PC-3 (cell line): ENCODE measurements at regions of chr12 and their contacts with region 1.

Region 1: GRCh38 chr12:82685790-82686167 is 927 bp upstream of the TMTC2 start:
- DNase-seq: peak; percentile 97
- ATAC-seq: peak; percentile 48
- H3K4me3 ChIP-seq: peak overlapping the region; percentile 76
- H3K27ac ChIP-seq: peak overlapping the region; percentile 96
- H3K4me1 ChIP-seq: peaks cover 49% of the 10 kb centered on the region
- H3K27me3 ChIP-seq: no peaks in the 10 kb centered on the region
- CTCF ChIP-seq: peak; percentile 94

Region 2: DNA sequence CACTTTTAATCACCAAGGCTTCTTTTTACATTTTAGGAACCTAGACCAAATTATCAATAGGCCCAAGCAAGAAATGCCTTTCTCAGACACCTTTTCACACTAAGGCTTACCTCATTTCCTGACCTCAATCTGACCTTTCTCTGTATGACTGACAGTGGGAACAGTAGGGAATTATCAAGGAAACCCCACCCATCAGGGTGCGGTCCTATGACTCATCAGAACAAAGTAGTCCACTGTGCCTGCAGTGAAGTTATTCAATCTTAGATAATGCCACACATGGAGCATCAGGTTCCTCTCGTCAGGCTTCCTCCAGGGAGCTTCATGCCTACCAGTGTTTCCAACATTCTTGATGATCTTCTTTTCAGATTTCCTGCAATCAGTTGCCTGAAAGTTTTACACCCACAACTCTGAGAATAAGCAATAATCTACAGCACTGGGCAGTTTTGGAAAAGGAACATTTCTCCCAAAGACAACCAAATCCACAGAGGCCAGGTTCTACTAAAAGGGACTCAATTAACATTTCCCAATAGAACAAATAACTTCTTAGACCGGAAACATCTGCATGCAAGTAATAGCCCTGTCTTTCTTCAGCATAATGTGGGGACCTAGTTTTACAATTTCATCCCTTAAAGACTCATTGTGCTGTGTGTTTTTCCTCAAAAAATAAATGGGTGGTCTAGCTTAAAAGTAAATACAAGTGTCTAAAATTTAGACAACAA is 35.0 kb before region 1 on chr12:
- CTCF ChIA-PET with region 1: no interaction called
- POLR2A ChIA-PET with region 1: interaction called, 4 read pairs
- intact Hi-C with region 1: loop called (anchors 2 kb)
- DNase-seq: peak; percentile 98
- ATAC-seq: peak; percentile 91
- H3K4me3 ChIP-seq: peak overlapping the region; percentile 16; the same call in 1 of the 2 replicates
- H3K27ac ChIP-seq: peak overlapping the region; percentile 96
- H3K4me1 ChIP-seq: peaks cover 35% of the 10 kb centered on the region
- H3K27me3 ChIP-seq: no peaks in the 10 kb centered on the region
- CTCF ChIP-seq: no peak

Region 3: DNA sequence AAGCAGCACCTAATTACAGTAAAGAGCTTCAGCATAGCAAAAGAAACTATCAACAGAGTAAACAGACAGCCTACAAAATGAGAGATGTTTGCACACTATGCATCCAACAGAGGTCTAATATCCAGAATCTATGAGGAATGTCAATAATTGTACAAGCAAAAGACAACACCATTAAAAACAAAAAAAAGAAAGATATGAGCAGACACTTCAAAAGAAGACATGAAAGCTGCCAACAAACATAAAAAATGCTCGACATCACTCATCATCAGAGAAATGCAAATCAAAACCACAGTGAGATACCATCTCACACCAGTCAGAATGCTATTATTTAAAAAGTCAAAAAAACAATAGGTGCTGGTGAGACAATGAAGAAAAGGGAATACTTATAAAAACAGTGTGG is 274.0 kb after region 1 on chr12:
- CTCF ChIA-PET with region 1: interaction called, 4 read pairs
- POLR2A ChIA-PET with region 1: no interaction called
- intact Hi-C with region 1: loop called (anchors 1 kb)
- DNase-seq: peak; percentile 39
- ATAC-seq: peak; percentile 74
- H3K4me3 ChIP-seq: no peak overlapping the region
- H3K27ac ChIP-seq: peak overlapping the region; percentile 43
- H3K4me1 ChIP-seq: peaks cover 28% of the 10 kb centered on the region
- H3K27me3 ChIP-seq: no peaks in the 10 kb centered on the region
- CTCF ChIP-seq: no peak

Region 4: DNA sequence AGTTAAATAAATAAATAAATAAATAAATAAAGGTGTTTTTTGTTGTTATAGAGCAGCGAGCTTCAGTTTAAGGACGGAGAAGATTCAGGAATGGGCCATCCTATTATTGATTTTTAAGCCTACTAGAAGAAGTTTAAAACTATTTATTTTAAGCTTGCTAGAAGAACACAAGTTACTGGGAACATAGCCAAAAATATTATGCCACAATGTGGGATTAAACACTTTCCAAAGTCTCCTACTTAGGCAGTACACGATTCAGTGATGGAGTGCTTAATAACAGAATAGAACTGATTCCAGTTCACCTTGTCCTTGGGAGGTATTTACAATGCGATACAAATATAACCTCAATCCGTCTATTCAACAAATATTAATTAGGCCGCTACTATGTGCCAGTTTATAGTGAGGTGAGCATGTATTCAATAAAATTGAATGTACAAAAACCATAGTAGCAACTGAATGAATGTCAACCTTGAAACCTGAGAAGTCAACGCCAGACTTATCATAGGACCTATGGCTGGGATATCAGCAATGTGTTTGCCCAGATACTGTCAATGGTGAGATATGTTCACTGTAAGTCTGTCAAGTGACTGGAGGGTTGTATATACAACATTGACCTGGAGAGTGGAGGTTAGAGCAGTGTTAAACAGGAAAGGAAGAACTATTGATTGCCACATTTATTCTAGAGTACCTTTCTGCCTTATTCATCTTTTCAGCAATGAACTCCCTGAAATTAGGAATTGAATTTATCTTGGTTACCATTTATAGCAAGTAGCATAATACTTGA is 487.3 kb after region 1 on chr12:
- CTCF ChIA-PET with region 1: no interaction called
- POLR2A ChIA-PET with region 1: no interaction called
- intact Hi-C with region 1: loop called (anchors 10 kb)
- DNase-seq: no peak
- ATAC-seq: no peak
- H3K4me3 ChIP-seq: no peak overlapping the region
- H3K27ac ChIP-seq: no peak overlapping the region
- H3K4me1 ChIP-seq: no peaks in the 10 kb centered on the region
- H3K27me3 ChIP-seq: no peaks in the 10 kb centered on the region
- CTCF ChIP-seq: no peak

Region 5: GRCh38 chr12:83823431-83823963 is 1137.7 kb after region 1 on chr12:
- CTCF ChIA-PET with region 1: no interaction called
- POLR2A ChIA-PET with region 1: no interaction called
- intact Hi-C with region 1: loop called (anchors 10 kb)
- DNase-seq: peak; percentile 64
- ATAC-seq: peak; percentile 46; the same call in 1 of the 2 replicates
- H3K4me3 ChIP-seq: no peak overlapping the region
- H3K27ac ChIP-seq: no peak overlapping the region
- H3K4me1 ChIP-seq: peaks cover 10% of the 10 kb centered on the region
- H3K27me3 ChIP-seq: no peaks in the 10 kb centered on the region
- CTCF ChIP-seq: peak; percentile 76